Right ventricle myocardium inferior (tissue), 1 donor: ENCODE measurements at regions of chr15 and their contacts with region 1.

Region 1: GRCh38 chr15:95843241-95843910 is 487.1 kb upstream of the NR2F2 start:
- DNase-seq: no peak
- ATAC-seq: peak; percentile 68

Region 2: GRCh38 chr15:95446854-95447253 is 396.5 kb before region 1 on chr15:
- intact Hi-C with region 1: loop called (anchors 10 kb)
- DNase-seq: no peak
- ATAC-seq: no peak

Region 3: DNA sequence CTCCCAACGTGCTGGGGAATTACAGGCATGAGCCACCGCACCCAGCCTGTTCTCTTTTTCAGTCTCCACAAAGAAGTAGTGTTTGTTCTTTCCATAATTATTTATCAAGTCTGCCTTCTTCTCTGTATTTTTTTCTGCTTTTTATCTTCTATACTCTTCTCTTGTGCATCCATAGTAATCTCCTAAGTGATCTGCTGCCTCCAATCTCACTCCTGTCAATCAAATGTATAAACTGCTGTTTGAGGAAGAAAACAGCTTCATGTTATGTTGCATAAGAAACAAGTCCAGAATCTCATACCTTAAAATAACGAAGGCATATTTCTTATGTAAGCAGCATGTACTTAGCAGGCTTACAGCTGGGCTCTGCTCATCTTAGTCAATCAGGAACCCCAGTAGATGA is 314.5 kb before region 1 on chr15:
- intact Hi-C with region 1: no loop called
- DNase-seq: no peak
- ATAC-seq: no peak